PC-9 (cell line): ENCODE measurements at regions of chr17 and their contacts with region 1.

Region 1: GRCh38 chr17:17313350-17313991 is 10.3 kb downstream of the NT5M start:
- DNase-seq: peak in 1 of 2 experiments; percentile 70
- H3K4me3 ChIP-seq: no peak overlapping the region
- H3K27ac ChIP-seq: no peak overlapping the region
- H3K4me1 ChIP-seq: no peaks in the 10 kb centered on the region
- H3K27me3 ChIP-seq: no peaks in the 10 kb centered on the region
- CTCF ChIP-seq: peak; percentile 72

Region 2: GRCh38 chr17:16915752-16916556 is 397.5 kb before region 1 on chr17:
- CTCF ChIA-PET with region 1: interaction called, 4 read pairs
- POLR2A ChIA-PET with region 1: no interaction called
- intact Hi-C with region 1: loop called (anchors 5 kb)
- DNase-seq: peak; percentile 56 to 73
- H3K4me3 ChIP-seq: no peak overlapping the region
- H3K27ac ChIP-seq: no peak overlapping the region
- H3K4me1 ChIP-seq: no peaks in the 10 kb centered on the region
- H3K27me3 ChIP-seq: no peaks in the 10 kb centered on the region
- CTCF ChIP-seq: peak; percentile 70

Region 3: GRCh38 chr17:17001874-17002520 is 311.5 kb before region 1 on chr17:
- CTCF ChIA-PET with region 1: no interaction called
- POLR2A ChIA-PET with region 1: no interaction called
- intact Hi-C with region 1: loop called (anchors 1 kb)
- DNase-seq: peak; percentile 58 to 88
- H3K4me3 ChIP-seq: no peak overlapping the region
- H3K27ac ChIP-seq: no peak overlapping the region
- H3K4me1 ChIP-seq: peaks cover 4% of the 10 kb centered on the region; the same call in 1 of the 2 replicates
- H3K27me3 ChIP-seq: no peaks in the 10 kb centered on the region
- CTCF ChIP-seq: peak; percentile 98

Region 4: GRCh38 chr17:17342242-17342945 is 28.9 kb after region 1 on chr17:
- CTCF ChIA-PET with region 1: no interaction called
- POLR2A ChIA-PET with region 1: no interaction called
- intact Hi-C with region 1: loop called (anchors 2 kb)
- DNase-seq: no peak
- H3K4me3 ChIP-seq: no peak overlapping the region
- H3K27ac ChIP-seq: no peak overlapping the region
- H3K4me1 ChIP-seq: no peaks in the 10 kb centered on the region
- H3K27me3 ChIP-seq: no peaks in the 10 kb centered on the region
- CTCF ChIP-seq: no peak